ENCODE measurements at regions of chr3 and their contacts with region 1.

Region 1: GRCh38 chr3:51941798-51942602 is at the starts of genes PARP3 and RRP9:
- DNase-seq: peak; percentile 100
- ATAC-seq: peak; percentile 93
- H3K4me3 Mint-ChIP-seq: peak within 1 kb of the TSS; percentile 81
- H3K27ac Mint-ChIP-seq: peak within 1 kb of the TSS; percentile 89
- H3K4me1 Mint-ChIP-seq: peaks cover 54% of the 10 kb centered on the region
- H3K27me3 Mint-ChIP-seq: no peaks in the 10 kb centered on the region
- total RNA-seq, gene PARP3: 18.8 to 20.4 TPM
- total RNA-seq, gene RRP9: 29.2 to 29.6 TPM

Region 2: DNA sequence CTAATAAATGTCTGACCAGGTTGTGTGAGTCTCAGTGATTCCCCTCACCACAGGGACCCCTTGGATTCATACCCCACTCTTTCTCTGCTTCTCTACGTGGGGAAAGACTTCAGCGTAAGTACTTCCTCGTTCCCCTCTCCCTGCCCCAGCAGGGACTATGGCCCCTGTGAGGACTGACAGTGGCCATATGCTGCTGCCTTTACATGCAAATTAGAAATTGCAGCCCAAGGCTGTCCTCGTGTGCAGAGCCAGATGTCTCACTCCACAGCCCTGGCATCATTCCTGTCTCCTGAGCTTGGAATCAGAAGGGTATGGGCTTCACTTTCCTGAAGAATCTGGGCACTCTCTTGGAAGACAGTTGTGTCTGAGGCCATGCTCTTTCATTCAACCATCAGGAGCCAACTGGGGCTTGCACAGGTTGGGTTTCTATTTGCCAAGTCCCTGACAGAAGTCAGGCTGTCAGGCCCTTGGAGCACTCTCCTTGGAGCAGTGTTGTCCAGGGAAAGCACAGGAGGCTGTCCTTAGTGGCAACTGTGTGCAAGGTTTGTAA is 111.1 kb before region 1 on chr3:
- CTCF ChIA-PET with region 1: no interaction called
- POLR2A ChIA-PET with region 1: no interaction called
- DNase-seq: no peak
- ATAC-seq: no peak
- H3K4me3 Mint-ChIP-seq: no peak overlapping the region
- H3K27ac Mint-ChIP-seq: no peak overlapping the region
- H3K4me1 Mint-ChIP-seq: no peaks in the 10 kb centered on the region
- H3K27me3 Mint-ChIP-seq: peaks cover 26% of the 10 kb centered on the region

Region 3: DNA sequence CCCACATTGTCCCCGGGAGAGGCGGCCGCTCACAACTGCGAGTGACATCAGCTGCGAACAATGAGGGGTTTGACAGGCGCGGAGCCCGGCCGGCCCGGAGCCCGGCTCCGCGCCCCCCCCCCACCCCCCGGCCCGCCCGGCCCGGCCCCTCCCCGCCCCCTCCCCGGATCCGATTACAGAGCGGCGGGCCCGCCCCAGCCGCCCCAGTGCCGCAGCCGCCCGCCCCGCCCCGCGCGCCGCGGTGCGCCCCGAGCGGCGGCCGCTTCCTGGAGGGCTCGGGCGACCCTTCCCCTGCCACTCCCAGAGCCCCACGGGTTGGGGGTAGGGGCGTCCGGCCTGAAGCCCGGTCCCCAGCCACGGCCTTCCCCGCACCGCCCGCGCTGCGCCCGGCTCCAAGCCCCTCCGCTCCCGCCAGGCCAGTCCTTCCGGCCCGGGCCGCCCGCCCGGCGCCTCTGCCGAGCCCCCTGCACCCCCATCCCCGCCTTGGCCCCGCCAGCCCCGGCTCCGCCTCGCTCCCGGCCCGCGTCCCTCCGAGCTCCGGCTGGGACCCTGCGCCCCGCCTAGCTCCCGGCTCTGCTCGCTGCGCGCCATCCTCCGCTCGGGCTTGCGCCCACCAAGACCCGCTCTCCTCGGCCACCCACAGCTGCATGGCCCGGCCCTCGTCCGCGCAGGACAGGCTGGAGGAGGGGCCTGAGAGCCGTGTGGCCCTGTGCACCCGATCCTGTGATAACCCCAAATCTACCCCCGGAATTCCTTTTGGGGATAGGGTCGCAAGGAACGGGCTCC is 25.6 kb after region 1 on chr3 and contains the start of gene PCBP4:
- CTCF ChIA-PET with region 1: interaction called, 19 read pairs
- POLR2A ChIA-PET with region 1: interaction called, 3 read pairs
- DNase-seq: peak; percentile 45
- ATAC-seq: peak; percentile 62
- H3K4me3 Mint-ChIP-seq: peak within 1 kb of the TSS; percentile 75
- H3K27ac Mint-ChIP-seq: peak within 1 kb of the TSS; percentile 64
- H3K4me1 Mint-ChIP-seq: peaks cover 21% of the 10 kb centered on the region
- H3K27me3 Mint-ChIP-seq: peaks cover 6% of the 10 kb centered on the region
- total RNA-seq, gene PCBP4: 12.7 to 16.1 TPM

Region 4: GRCh38 chr3:51974963-51975851 is 33.2 kb after region 1 on chr3 and contains the start of gene ABHD14A:
- CTCF ChIA-PET with region 1: interaction called, 54 read pairs
- POLR2A ChIA-PET with region 1: interaction called, 5 read pairs
- DNase-seq: peak; percentile 73
- ATAC-seq: peak; percentile 81
- H3K4me3 Mint-ChIP-seq: peak within 1 kb of the TSS; percentile 98
- H3K27ac Mint-ChIP-seq: peak within 1 kb of the TSS; percentile 93
- H3K4me1 Mint-ChIP-seq: peaks cover 50% of the 10 kb centered on the region
- H3K27me3 Mint-ChIP-seq: no peaks in the 10 kb centered on the region
- total RNA-seq, gene ABHD14A: 10.5 to 11.7 TPM

Region 5: GRCh38 chr3:51982782-51983577 is 41.0 kb after region 1 on chr3 and contains the start of gene ACY1:
- CTCF ChIA-PET with region 1: interaction called, 20 read pairs
- POLR2A ChIA-PET with region 1: interaction called, 6 read pairs
- DNase-seq: peak; percentile 78
- ATAC-seq: peak; percentile 85
- H3K4me3 Mint-ChIP-seq: peak within 1 kb of the TSS; percentile 96
- H3K27ac Mint-ChIP-seq: peak within 1 kb of the TSS; percentile 93
- H3K4me1 Mint-ChIP-seq: peaks cover 28% of the 10 kb centered on the region
- H3K27me3 Mint-ChIP-seq: no peaks in the 10 kb centered on the region
- total RNA-seq, gene ACY1: 17.4 to 21.2 TPM

Region 6: GRCh38 chr3:51995346-51996163 is 53.6 kb after region 1 on chr3 and contains the start of gene RPL29:
- CTCF ChIA-PET with region 1: interaction called, 14 read pairs
- POLR2A ChIA-PET with region 1: interaction called, 6 read pairs
- DNase-seq: peak; percentile 95
- ATAC-seq: peak; percentile 94
- H3K4me3 Mint-ChIP-seq: peak within 1 kb of the TSS; percentile 100
- H3K27ac Mint-ChIP-seq: peak within 1 kb of the TSS; percentile 100
- H3K4me1 Mint-ChIP-seq: peaks cover 47% of the 10 kb centered on the region
- H3K27me3 Mint-ChIP-seq: peaks cover 10% of the 10 kb centered on the region
- total RNA-seq, gene RPL29: 1,199 to 1,266 TPM